ENCODE measurements at regions of chr4 and their contacts with region 1.

Region 1: GRCh38 chr4:89226665-89227574 is 80.7 kb downstream of the GPRIN3 start:
- DNase-seq: peak; percentile 25
- ATAC-seq: peak; percentile 85
- H3K4me3 Mint-ChIP-seq: no peak overlapping the region
- H3K27ac Mint-ChIP-seq: no peak overlapping the region
- H3K4me1 Mint-ChIP-seq: peaks cover 4% of the 10 kb centered on the region
- H3K27me3 Mint-ChIP-seq: no peaks in the 10 kb centered on the region
- CTCF ChIP-seq: peak; percentile 20

Region 2: GRCh38 chr4:89158884-89159503 is 67.9 kb before region 1 on chr4:
- CTCF ChIA-PET with region 1: interaction called, 4 read pairs
- POLR2A ChIA-PET with region 1: no interaction called
- intact Hi-C with region 1: loop called (anchors 2 kb)
- DNase-seq: no peak
- ATAC-seq: peak; percentile 56
- H3K4me3 Mint-ChIP-seq: no peak overlapping the region
- H3K27ac Mint-ChIP-seq: no peak overlapping the region
- H3K4me1 Mint-ChIP-seq: no peaks in the 10 kb centered on the region
- H3K27me3 Mint-ChIP-seq: peaks cover 3% of the 10 kb centered on the region
- CTCF ChIP-seq: peak; percentile 55

Region 3: DNA sequence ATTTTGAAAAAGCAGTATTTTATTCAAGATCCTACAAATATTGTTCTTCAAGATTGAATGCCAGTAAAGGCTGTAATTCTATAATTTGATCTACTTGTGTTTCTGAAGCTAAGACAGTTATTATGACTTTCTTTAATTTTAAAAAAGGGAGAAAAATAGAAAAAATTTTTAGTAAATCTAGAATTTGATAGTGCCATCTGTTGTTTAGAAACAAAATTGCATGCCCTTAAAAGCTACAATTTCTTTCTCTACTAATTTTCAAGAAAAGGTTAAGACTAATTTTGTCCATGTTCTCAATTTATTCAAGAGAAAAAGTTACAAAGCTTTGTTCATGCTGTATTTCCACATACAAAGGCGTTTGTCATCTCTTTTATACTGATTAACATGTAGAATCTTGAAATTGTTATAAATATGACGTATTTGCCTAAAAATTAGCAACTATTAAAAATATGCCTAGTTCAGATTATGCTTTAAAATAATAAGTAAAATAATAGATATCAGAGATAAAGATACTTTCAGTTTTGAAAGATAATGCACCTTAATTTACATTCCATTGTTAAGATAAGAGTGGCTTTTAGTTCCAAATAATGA is 642.2 kb after region 1 on chr4:
- CTCF ChIA-PET with region 1: interaction called, 5 read pairs
- POLR2A ChIA-PET with region 1: no interaction called
- intact Hi-C with region 1: loop called (anchors 1 kb)
- DNase-seq: no peak
- ATAC-seq: no peak
- H3K4me3 Mint-ChIP-seq: no peak overlapping the region
- H3K27ac Mint-ChIP-seq: no peak overlapping the region
- H3K4me1 Mint-ChIP-seq: no peaks in the 10 kb centered on the region
- H3K27me3 Mint-ChIP-seq: no peaks in the 10 kb centered on the region
- CTCF ChIP-seq: no peak

Measured in activated B cell treated with CpG ODN at 0.5 μM for 24 hours (primary cell).